ENCODE measurements at regions of chr14 and their contacts with region 1.

Region 1: GRCh38 chr14:103740991-103741689 is 25.5 kb downstream of the ZFYVE21 start:
- DNase-seq: peak in 1 of 2 experiments; percentile 17
- H3K4me3 ChIP-seq: no peak overlapping the region
- H3K4me3 Mint-ChIP-seq: no peak overlapping the region
- H3K27ac Mint-ChIP-seq: no peak overlapping the region
- H3K4me1 ChIP-seq: no peaks in the 10 kb centered on the region
- H3K4me1 Mint-ChIP-seq: no peaks in the 10 kb centered on the region
- H3K27me3 ChIP-seq: no peaks in the 10 kb centered on the region
- H3K27me3 Mint-ChIP-seq: no peaks in the 10 kb centered on the region
- CTCF ChIP-seq: no peak

Region 2: GRCh38 chr14:103753809-103754208 is 12.7 kb after region 1 on chr14:
- CTCF ChIA-PET with region 1: no interaction called
- POLR2A ChIA-PET with region 1: interaction called, 12 read pairs
- intact Hi-C with region 1: no loop called
- DNase-seq: no peak
- H3K4me3 ChIP-seq: no peak overlapping the region
- H3K4me3 Mint-ChIP-seq: no peak overlapping the region
- H3K27ac Mint-ChIP-seq: no peak overlapping the region
- H3K4me1 ChIP-seq: no peaks in the 10 kb centered on the region
- H3K4me1 Mint-ChIP-seq: no peaks in the 10 kb centered on the region
- H3K27me3 ChIP-seq: no peaks in the 10 kb centered on the region
- H3K27me3 Mint-ChIP-seq: no peaks in the 10 kb centered on the region
- CTCF ChIP-seq: no peak

Region 3: GRCh38 chr14:103994535-103995182 is 253.5 kb after region 1 on chr14:
- CTCF ChIA-PET with region 1: no interaction called
- POLR2A ChIA-PET with region 1: no interaction called
- intact Hi-C with region 1: no loop called
- DNase-seq: no peak
- H3K4me3 ChIP-seq: no peak overlapping the region
- H3K4me3 Mint-ChIP-seq: no peak overlapping the region
- H3K27ac Mint-ChIP-seq: no peak overlapping the region
- H3K4me1 ChIP-seq: no peaks in the 10 kb centered on the region
- H3K4me1 Mint-ChIP-seq: no peaks in the 10 kb centered on the region
- H3K27me3 ChIP-seq: no peaks in the 10 kb centered on the region
- H3K27me3 Mint-ChIP-seq: peaks cover 2% of the 10 kb centered on the region
- CTCF ChIP-seq: no peak

Measured in Caco-2 (cell line).